ENCODE measurements at regions of chr1 and their contacts with region 1.

Region 1: DNA sequence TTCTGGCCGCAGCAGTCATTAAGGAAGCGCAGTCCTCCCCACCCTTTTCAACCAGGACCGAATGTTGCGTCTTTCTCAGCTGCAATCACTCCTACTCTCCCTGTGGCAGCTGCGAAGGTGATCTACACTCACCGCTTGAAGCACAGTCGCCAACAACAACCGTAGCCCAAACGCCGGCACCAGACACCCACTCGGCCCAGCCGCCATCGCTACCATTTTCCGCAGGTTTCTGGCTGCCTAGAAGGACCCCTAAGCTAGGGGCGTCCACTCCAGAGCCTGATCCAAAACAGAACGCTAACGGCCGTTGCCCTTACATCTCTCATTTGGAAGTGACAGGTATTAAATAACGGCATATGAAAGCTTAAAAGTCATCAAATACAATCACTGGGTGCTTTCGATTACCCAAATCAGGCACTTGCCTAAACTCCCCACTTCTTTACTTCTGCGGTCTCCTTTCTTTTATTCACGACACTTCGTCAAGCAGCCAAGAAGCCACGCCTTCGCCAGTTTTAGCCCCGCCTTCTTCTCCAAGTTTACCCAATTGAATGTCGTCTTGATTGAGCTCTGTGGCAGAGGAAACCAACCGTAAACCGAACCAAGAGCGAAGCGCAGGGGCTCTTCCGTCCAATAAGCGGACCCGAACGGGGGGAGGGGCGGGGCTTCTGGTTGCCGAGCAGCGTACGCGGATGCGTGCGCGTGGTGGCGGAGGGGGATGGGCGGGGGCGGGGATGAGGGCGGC is at the start of gene SELENOF:
- DNase-seq: peak; percentile 94 to 99 (median 98)
- H3K4me3 ChIP-seq: peak within 1 kb of the TSS; percentile 61 to 99 (median 89)
- H3K27ac ChIP-seq: peak within 1 kb of the TSS; percentile 59 to 98 (median 93)
- H3K27me3 ChIP-seq: no peaks in the 10 kb centered on the region
- CTCF ChIP-seq: peak in 11 of 56 donors; percentile 5 to 34 (median 9)
- total RNA-seq, gene SELENOF: 81.1 to 146 (median 111) TPM

Region 2: GRCh38 chr1:86965012-86965826 is 51.2 kb after region 1 on chr1:
- intact Hi-C with region 1: loop called in 1 of 2 experiments (anchors 10 kb)
- DNase-seq: no peak
- H3K4me3 ChIP-seq: no peak overlapping the region
- H3K27ac ChIP-seq: no peak overlapping the region
- H3K27me3 ChIP-seq: no peaks in the 10 kb centered on the region
- CTCF ChIP-seq: peak in 55 of 56 donors; percentile 15 to 77 (median 59)

Region 3: DNA sequence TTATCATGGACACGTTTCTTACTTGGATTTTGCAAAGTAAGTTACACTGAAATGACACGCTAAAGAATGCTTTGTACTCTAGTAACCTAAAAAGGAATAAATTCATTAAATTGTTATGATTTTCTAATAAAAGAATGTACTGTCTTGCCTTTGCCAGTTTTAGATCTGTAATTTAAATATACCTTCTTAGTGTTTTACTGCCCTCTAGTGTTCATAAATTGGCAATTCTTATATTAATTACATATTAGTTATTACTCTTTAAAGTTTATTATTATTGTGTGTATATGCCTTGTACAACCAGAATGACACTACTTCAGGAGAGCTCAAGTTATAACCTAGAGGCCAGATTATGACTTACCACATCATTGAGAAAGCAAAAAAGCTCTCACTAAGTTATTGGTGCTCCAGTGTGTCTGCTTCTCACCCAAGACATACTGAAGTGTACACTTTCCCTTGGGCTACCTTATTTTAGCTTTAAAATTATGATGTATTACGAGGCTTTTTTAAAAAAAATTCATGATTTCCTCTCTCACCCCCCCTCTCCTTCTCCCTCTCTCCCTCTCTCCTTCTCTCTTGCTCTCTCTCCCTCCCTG is 170.3 kb after region 1 on chr1:
- intact Hi-C with region 1: loop called in 1 of 2 experiments (anchors 10 kb)
- DNase-seq: no peak
- H3K4me3 ChIP-seq: no peak overlapping the region
- H3K27ac ChIP-seq: no peak overlapping the region
- H3K27me3 ChIP-seq: no peaks in the 10 kb centered on the region
- CTCF ChIP-seq: peak; percentile 38 to 85 (median 66)